Vagina (tissue), 2 donors: ENCODE measurements at regions of chr12 and their contacts with region 1.

Region 1: GRCh38 chr12:50074936-50075807 is 10.0 kb upstream of the SMARCD1 start:
- DNase-seq: no peak
- H3K4me3 ChIP-seq: no peak overlapping the region
- H3K27ac ChIP-seq: no peak overlapping the region
- H3K4me1 ChIP-seq: peaks cover 6% of the 10 kb centered on the region
- H3K27me3 ChIP-seq: no peaks in the 10 kb centered on the region
- CTCF ChIP-seq: peak; percentile 90 to 95 (median 91)
- POLR2A ChIP-seq: no peak

Region 2: GRCh38 chr12:49866859-49867579 is 208.2 kb before region 1 on chr12:
- intact Hi-C with region 1: loop called (anchors 10 kb)
- DNase-seq: peak in 1 of 2 donors; percentile 87
- H3K4me3 ChIP-seq: no peak overlapping the region
- H3K27ac ChIP-seq: peak overlapping the region; percentile 85
- H3K4me1 ChIP-seq: peaks cover 32% of the 10 kb centered on the region
- H3K27me3 ChIP-seq: no peaks in the 10 kb centered on the region
- CTCF ChIP-seq: peak; percentile 52 to 96 (median 94)
- POLR2A ChIP-seq: no peak

Region 3: GRCh38 chr12:49967042-49967776 is 108.0 kb before region 1 on chr12:
- intact Hi-C with region 1: loop called (anchors 5 kb)
- DNase-seq: no peak
- H3K4me3 ChIP-seq: peak overlapping the region; percentile 35 to 42
- H3K27ac ChIP-seq: no peak overlapping the region
- H3K4me1 ChIP-seq: peaks cover 17% of the 10 kb centered on the region
- H3K27me3 ChIP-seq: no peaks in the 10 kb centered on the region
- CTCF ChIP-seq: peak; percentile 89 to 95 (median 95)
- POLR2A ChIP-seq: no peak

Region 4: GRCh38 chr12:50174971-50175715 is 100.0 kb after region 1 on chr12:
- intact Hi-C with region 1: loop called (anchors 5 kb)
- DNase-seq: no peak
- H3K4me3 ChIP-seq: no peak overlapping the region
- H3K27ac ChIP-seq: no peak overlapping the region
- H3K4me1 ChIP-seq: no peaks in the 10 kb centered on the region
- H3K27me3 ChIP-seq: no peaks in the 10 kb centered on the region
- CTCF ChIP-seq: peak; percentile 60 to 84 (median 75)
- POLR2A ChIP-seq: no peak

Region 5: DNA sequence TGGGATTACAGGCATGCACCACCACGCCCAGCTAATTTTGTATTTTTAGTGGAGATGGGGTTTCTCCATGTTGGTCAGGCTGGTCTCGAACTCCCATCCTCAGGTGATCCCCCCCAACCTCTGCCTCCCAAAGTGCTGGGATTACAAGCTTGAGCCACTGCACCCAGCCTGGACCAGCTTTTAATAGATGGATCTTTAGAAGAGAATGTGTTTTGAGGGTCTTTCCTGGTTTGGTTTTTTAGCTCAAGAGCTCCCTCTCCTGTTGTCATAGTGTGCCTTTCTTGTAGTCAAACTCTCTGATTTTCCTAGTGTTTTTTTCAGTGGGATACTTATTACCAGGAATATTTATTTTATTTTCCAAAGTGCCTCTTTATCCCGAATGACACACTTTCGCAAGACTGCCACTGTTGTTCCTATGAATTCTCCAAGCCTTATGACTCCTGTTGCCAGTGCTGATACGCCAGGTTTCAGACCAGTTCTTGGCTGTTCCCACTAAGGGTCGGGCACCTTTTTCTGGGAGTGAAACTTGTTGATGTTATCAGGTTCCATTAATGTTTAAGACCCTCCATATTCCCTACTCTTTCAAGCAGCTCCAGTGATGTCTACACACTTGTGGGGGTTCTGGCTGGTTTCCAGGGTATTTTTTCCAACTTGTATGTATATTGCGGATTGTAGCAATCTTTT is 239.6 kb after region 1 on chr12:
- intact Hi-C with region 1: loop called (anchors 10 kb)
- DNase-seq: no peak
- H3K4me3 ChIP-seq: no peak overlapping the region
- H3K27ac ChIP-seq: no peak overlapping the region
- H3K4me1 ChIP-seq: peaks cover 17% of the 10 kb centered on the region
- H3K27me3 ChIP-seq: no peaks in the 10 kb centered on the region
- CTCF ChIP-seq: peak; percentile 57 to 69 (median 65)
- POLR2A ChIP-seq: no peak